ENCODE measurements at regions of chr15 and their contacts with region 1.

Region 1: DNA sequence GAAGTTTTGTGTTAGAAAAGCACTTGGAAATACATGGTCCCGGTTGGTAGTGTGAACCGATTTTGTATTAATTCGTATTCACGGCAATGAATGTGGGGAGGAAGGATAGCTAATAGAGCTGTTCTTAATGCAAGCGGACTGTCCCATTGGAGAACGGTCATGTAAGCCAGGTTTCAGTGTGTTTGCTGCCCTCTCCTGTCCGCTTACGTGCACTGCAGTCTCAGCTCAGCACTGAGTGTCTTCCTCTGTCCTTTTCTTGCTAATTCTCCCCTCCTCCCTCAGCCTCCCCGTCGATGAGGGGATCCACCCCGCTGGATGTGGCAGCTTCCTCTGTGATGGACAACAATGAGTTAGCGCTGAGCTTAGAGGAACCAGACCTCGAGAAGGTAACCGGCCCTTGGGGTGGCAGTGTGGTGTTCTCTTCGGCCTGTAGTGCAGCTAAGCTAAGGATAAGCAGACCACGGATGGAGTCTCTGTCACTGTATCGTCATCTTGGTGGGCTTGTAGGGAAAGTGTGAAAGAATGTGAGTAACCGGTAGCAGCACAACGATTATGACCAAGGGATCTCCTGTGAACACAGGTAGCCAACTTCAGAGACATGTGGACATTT is 267.5 kb upstream of the CHRM5 start:
- DNase-seq: peak; percentile 77
- ATAC-seq: peak; percentile 77
- H3K4me3 Mint-ChIP-seq: no peak overlapping the region
- H3K27ac Mint-ChIP-seq: no peak overlapping the region
- H3K4me1 Mint-ChIP-seq: no peaks in the 10 kb centered on the region
- H3K27me3 Mint-ChIP-seq: peaks cover 6% of the 10 kb centered on the region

Region 2: GRCh38 chr15:33234014-33234461 is 466.8 kb before region 1 on chr15:
- CTCF ChIA-PET with region 1: no interaction called
- POLR2A ChIA-PET with region 1: no interaction called
- intact Hi-C with region 1: loop called in 1 of 2 experiments (anchors 2 kb)
- DNase-seq: peak; percentile 15
- ATAC-seq: no peak
- H3K4me3 Mint-ChIP-seq: no peak overlapping the region
- H3K27ac Mint-ChIP-seq: no peak overlapping the region
- H3K4me1 Mint-ChIP-seq: no peaks in the 10 kb centered on the region
- H3K27me3 Mint-ChIP-seq: peaks cover 7% of the 10 kb centered on the region

Region 3: DNA sequence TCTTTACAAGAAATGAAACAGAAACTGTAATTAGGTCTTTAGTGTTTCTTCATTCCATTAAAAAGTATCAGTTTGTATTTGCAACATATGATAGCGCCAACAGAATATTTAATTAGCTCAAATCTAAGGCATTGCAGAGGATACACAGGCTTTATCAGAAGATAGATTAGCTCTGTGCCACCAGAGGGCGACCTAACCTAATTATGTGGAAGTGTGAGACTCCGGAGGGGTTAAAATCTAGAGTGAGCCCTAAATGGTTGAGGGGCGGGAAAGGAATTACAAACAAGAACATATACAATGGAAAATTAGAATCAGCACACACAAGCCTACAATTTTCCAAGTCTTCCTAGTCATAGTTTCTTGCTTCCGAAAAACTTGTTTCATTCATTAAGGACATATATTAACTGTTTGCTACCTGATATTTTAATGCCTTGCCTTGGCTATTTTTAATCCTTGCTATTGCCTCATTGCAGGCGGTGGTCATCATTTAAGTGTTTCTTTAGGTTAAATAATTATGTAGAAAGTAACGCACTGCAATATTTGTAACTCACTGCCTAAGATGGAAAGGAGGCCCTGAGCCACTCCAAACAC is 408.0 kb before region 1 on chr15:
- CTCF ChIA-PET with region 1: interaction called, 43 read pairs
- POLR2A ChIA-PET with region 1: no interaction called
- intact Hi-C with region 1: loop called (anchors 1 kb)
- DNase-seq: peak; percentile 77
- ATAC-seq: no peak
- H3K4me3 Mint-ChIP-seq: no peak overlapping the region
- H3K27ac Mint-ChIP-seq: no peak overlapping the region
- H3K4me1 Mint-ChIP-seq: no peaks in the 10 kb centered on the region
- H3K27me3 Mint-ChIP-seq: no peaks in the 10 kb centered on the region

Region 4: GRCh38 chr15:33309602-33310276 is 391.1 kb before region 1 on chr15:
- CTCF ChIA-PET with region 1: no interaction called
- POLR2A ChIA-PET with region 1: no interaction called
- intact Hi-C with region 1: loop called in 1 of 2 experiments (anchors 5 kb)
- DNase-seq: peak; percentile 15
- ATAC-seq: no peak
- H3K4me3 Mint-ChIP-seq: no peak overlapping the region
- H3K27ac Mint-ChIP-seq: no peak overlapping the region
- H3K4me1 Mint-ChIP-seq: no peaks in the 10 kb centered on the region
- H3K27me3 Mint-ChIP-seq: peaks cover 40% of the 10 kb centered on the region

Region 5: DNA sequence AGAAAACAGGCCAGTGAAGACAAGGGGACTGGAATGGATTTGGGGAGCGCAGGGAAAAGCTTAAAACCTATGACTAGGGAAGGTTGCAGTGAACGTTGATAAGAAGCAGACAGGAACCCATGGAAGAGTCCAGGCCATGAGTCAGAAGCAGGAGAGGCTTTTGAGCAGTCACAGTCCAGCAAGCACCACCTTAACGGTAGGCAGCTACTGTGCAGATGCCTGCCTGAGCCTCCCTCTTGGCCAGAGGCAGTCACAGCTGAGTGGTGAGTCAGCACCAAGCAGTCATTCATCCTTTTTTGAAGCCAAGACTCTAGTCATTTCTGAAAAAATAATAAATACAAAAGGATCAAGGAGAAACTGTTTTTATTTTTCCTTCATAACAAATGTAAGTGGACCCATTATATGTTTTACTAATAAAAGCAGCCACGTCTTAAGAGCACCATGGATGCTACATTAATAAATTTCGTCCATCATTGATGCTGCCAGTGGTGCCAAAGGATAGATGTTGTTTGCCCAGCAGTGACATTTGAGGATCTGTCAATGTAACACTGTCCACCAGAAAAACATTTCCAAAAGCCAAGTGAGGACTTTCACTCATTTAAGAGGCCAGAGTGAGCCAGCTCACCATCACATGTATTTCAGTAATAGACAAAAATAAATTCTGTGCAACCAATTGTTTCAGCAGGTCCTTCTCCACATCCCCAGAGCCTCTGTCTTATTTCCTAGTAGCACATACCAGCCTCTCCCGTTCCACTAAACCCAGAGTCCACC is 1136.6 kb after region 1 on chr15:
- CTCF ChIA-PET with region 1: no interaction called
- POLR2A ChIA-PET with region 1: no interaction called
- intact Hi-C with region 1: no loop called
- DNase-seq: no peak
- ATAC-seq: no peak
- H3K4me3 Mint-ChIP-seq: no peak overlapping the region
- H3K27ac Mint-ChIP-seq: no peak overlapping the region
- H3K4me1 Mint-ChIP-seq: no peaks in the 10 kb centered on the region
- H3K27me3 Mint-ChIP-seq: peaks cover 11% of the 10 kb centered on the region

Measured in activated CD4-positive, alpha-beta T cell treated with anti-CD3 and anti-CD28 coated beads for 36 hours (primary cell).